Lower leg skin (tissue), 4 donors: ENCODE measurements at regions of chr16 and their contacts with region 1.

Region 1: DNA sequence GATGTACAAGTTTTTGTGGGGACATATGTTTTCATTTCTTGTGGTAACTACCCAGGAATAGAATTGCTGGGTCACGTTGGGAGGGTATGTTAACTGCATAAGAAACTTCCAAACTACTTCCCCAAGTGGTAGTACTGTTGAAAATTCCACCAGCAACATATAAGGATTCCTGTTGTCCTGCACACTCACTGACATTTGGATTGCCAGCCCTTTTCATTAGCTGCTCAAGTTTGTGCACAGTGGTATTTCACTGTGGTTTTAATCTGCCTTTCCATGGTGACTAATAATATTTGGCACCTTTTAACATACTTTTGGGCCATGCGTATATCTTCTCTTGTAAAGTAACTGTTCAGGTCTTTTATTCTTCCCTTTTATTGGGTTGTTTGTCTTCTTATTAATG is 103.3 kb downstream of the GNAO1 start:
- DNase-seq: no peak
- H3K4me3 ChIP-seq: no peak overlapping the region
- CTCF ChIP-seq: no peak
- POLR2A ChIP-seq: no peak

Region 2: GRCh38 chr16:55214974-55215494 is 1079.5 kb before region 1 on chr16:
- intact Hi-C with region 1: loop called (anchors 10 kb)
- DNase-seq: no peak
- H3K4me3 ChIP-seq: no peak overlapping the region
- CTCF ChIP-seq: no peak
- POLR2A ChIP-seq: no peak

Region 3: DNA sequence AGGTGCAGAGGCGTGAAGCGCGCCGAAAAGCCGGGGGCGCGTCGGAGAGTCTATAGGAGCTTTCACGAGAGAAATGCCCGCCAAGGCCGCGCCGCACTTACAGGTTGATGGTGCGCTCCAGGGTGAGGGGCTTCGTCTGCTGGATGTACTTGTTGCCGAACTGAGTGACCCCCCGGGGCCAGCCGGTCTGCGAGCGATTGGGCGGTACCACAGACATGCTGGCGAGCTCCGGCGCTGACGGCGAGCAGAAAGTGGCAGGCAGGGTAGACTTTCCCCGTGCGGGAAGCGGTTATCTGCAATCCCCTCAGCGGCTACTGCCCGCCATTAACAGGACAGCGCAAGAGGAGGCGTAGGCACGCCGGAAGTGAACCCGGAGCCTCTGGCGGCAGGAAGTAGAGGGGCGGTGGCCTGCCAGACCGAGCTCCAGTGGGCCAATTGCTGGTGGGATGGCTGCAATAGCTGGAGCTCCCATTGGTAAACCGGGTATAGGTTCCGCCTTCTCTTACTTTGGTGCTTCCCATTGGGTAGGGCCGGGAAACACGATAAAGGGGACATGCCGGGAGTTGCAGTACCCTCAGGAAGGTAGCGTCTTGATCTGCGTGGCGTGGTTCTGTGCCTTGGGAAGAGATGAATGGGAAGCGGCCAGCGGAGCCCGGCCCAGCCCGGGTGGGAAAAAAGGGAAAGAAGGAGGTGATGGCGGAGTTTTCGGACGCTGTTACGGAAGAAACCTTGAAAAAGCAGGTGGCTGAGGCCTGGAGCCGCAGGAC is 156.6 kb after region 1 on chr16 and contains the starts of genes NUDT21 and OGFOD1:
- intact Hi-C with region 1: no loop called
- DNase-seq: peak; percentile 96 to 99
- H3K4me3 ChIP-seq: peak within 1 kb of the TSS; percentile 93
- CTCF ChIP-seq: no peak
- POLR2A ChIP-seq: no peak
- total RNA-seq, gene NUDT21: 39.9 to 98.6 (median 46.1) TPM
- total RNA-seq, gene OGFOD1: 17.0 to 42.2 (median 34.6) TPM

Region 4: GRCh38 chr16:57314161-57314785 is 1019.7 kb after region 1 on chr16:
- intact Hi-C with region 1: no loop called
- DNase-seq: peak in 1 of 2 donors; percentile 50
- H3K4me3 ChIP-seq: no peak overlapping the region
- CTCF ChIP-seq: no peak
- POLR2A ChIP-seq: no peak